Mammary epithelial cell (primary cell): ENCODE measurements at regions of chr6 and their contacts with region 1.

Region 1: GRCh38 chr6:166627033-166627874 is at the start of gene RPS6KA2:
- DNase-seq: peak; percentile 99
- H3K4me3 ChIP-seq: peak within 1 kb of the TSS; percentile 55 to 91 (median 86)
- H3K27ac ChIP-seq: peak within 1 kb of the TSS; percentile 62
- H3K4me1 ChIP-seq: peaks cover 33% of the 10 kb centered on the region
- H3K27me3 ChIP-seq: no peaks in the 10 kb centered on the region
- CTCF ChIP-seq: no peak
- total RNA-seq, gene RPS6KA2: 47.8 to 48.8 TPM

Region 2: DNA sequence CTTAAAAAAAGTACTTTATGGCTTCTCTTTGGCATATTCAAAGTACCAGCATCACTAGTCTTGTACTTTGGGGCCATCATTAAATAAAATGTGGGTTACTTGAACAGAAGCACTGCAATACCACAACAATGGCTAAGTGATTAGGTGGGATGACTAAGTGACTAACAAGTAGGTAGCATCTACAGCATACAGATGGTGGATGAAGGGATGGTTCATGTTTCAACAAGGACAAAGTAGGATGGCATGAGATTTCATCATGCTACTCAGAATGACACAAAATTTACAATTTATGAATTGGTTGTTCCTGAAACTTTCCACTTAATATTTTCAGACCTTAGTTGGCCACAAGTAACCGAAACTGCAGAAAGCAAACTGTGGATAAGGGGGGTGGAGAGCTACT is 252.2 kb before region 1 on chr6:
- CTCF ChIA-PET with region 1: no interaction called
- dilution Hi-C with region 1: no loop called
- in situ Hi-C with region 1: no loop called
- intact Hi-C with region 1: no loop called
- DNase-seq: peak; percentile 12
- H3K4me3 ChIP-seq: no peak overlapping the region
- H3K27ac ChIP-seq: no peak overlapping the region
- H3K4me1 ChIP-seq: no peaks in the 10 kb centered on the region
- H3K27me3 ChIP-seq: no peaks in the 10 kb centered on the region
- CTCF ChIP-seq: no peak

Region 3: DNA sequence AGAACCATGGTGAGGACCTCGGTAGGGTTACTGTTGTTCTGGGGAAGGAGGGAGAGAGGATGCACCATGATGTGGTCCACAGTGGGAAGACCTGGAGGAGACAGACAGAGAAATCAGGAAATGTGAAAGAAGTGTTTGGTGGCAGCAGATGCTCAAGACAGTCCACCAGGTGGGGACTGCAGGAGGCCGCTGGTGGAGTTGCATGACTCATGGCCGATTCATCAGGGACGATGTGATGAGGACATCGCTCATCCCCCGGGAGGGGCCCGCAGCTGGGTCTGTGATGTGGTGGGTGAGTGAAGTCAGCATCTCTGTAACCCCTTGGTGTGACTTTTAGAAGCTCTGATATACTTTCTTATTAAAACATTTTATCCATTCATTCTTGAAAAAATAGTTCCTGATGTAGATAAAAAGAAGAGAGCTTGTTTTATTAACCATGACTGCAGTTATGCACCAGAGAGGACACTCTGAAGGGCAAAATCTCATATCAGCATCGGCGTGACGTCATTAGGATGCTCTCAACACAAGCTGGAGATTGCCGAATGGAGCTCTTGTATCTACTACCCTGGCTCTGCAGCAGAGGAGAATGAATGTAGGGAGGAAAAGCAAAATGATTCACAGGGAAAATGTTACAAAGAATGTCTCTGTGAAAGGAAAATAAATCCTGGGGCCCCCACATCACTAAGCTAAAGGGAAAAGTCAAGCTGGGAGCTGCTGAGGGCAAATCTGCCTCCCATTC is 112.0 kb before region 1 on chr6:
- CTCF ChIA-PET with region 1: no interaction called
- dilution Hi-C with region 1: no loop called
- in situ Hi-C with region 1: no loop called
- intact Hi-C with region 1: loop called (anchors 1 kb)
- DNase-seq: peak; percentile 80
- H3K4me3 ChIP-seq: no peak overlapping the region
- H3K27ac ChIP-seq: no peak overlapping the region
- H3K4me1 ChIP-seq: peaks cover 11% of the 10 kb centered on the region
- H3K27me3 ChIP-seq: no peaks in the 10 kb centered on the region
- CTCF ChIP-seq: peak; percentile 55 to 77

Region 4: DNA sequence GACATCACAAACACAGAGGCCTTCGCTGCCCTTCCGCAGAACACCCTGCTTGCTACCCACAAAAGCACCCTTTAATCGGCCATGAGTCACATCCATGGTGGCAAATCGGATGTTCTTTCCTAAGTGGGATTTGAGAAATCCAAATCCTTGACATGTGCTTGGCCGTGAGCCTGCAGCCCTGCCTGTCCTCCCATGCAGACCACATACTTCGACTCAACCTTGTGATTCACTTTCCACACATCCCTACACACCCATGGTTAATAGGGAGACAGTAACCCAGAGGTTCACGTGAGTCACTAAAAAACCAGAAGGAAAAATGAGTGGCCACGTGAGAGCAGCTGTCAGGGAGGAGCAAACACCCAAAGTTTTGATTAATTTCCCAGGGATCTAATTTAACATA is 60.1 kb before region 1 on chr6:
- CTCF ChIA-PET with region 1: no interaction called
- dilution Hi-C with region 1: no loop called
- in situ Hi-C with region 1: no loop called
- intact Hi-C with region 1: loop called (anchors 2 kb)
- DNase-seq: peak; percentile 98
- H3K4me3 ChIP-seq: no peak overlapping the region
- H3K27ac ChIP-seq: peak overlapping the region; percentile 69
- H3K4me1 ChIP-seq: peaks cover 28% of the 10 kb centered on the region
- H3K27me3 ChIP-seq: no peaks in the 10 kb centered on the region
- CTCF ChIP-seq: no peak

Region 5: DNA sequence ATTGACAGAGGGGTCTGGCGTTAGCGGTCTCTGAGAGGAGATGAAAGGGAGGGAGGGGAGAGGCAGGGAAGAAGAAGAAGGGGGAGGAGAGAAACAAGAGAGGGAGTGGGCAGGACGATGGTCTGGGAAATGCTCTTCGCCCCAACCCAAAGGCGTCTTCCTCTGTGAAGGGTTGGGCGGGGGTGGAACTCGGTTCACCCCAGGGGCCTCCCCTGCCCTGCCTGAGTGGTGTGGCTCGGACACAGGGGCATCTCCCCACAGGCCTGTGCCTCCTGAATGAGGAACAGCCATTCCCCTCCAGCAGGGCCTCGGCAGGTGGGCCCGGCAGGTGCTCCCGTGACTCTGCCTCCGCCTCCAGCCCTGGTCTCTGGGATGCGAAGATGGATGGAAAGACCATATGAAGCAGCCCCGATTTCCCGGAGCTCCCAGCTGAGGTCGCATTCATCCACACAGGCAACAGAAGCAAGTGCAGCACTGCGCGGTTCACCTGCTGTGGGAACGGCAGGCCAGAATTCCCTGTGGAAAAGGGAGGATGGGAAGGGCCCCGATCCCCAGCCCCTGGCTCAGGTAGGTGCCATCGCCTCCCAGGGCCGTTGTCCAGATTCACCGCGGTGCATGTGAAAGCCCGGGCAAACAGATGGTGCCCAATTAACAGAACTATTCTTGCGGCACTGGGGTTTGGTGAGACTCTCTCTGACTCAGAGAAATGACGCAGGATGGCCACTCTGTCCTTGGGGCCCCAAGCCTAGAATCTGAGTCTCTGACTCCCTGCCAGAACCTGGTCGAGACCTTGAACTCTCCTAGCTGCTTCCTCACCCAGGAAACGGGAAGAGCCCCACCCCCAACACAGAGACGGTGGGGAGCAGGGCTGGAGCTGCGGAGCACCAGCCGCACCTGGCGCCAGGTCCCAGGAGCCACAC is 29.2 kb after region 1 on chr6:
- CTCF ChIA-PET with region 1: no interaction called
- dilution Hi-C with region 1: no loop called
- in situ Hi-C with region 1: no loop called
- intact Hi-C with region 1: no loop called
- DNase-seq: no peak
- H3K4me3 ChIP-seq: no peak overlapping the region
- H3K27ac ChIP-seq: no peak overlapping the region
- H3K4me1 ChIP-seq: no peaks in the 10 kb centered on the region
- H3K27me3 ChIP-seq: peaks cover 3% of the 10 kb centered on the region
- CTCF ChIP-seq: no peak

Region 6: GRCh38 chr6:166956444-166957086 is 329.3 kb after region 1 on chr6 and contains the start of gene RNASET2:
- CTCF ChIA-PET with region 1: no interaction called
- dilution Hi-C with region 1: no loop called
- in situ Hi-C with region 1: no loop called
- intact Hi-C with region 1: loop called (anchors 10 kb)
- DNase-seq: peak; percentile 85
- H3K4me3 ChIP-seq: peak within 1 kb of the TSS; percentile 75 to 90 (median 81)
- H3K27ac ChIP-seq: no peak within 1 kb of the TSS
- H3K4me1 ChIP-seq: peaks cover 16% of the 10 kb centered on the region
- H3K27me3 ChIP-seq: no peaks in the 10 kb centered on the region
- CTCF ChIP-seq: no peak
- total RNA-seq, gene RNASET2: 17.0 to 18.7 TPM